Activated CD4-positive, alpha-beta T cell treated with anti-CD3 and anti-CD28 coated beads for 36 hours (primary cell): ENCODE measurements at regions of chr1 and their contacts with region 1.

Region 1: GRCh38 chr1:183251959-183252450 is 65.9 kb downstream of the LAMC2 start:
- DNase-seq: no peak
- ATAC-seq: no peak
- H3K4me3 Mint-ChIP-seq: no peak overlapping the region
- H3K27ac Mint-ChIP-seq: no peak overlapping the region
- H3K4me1 Mint-ChIP-seq: no peaks in the 10 kb centered on the region
- H3K27me3 Mint-ChIP-seq: peaks cover 21% of the 10 kb centered on the region

Region 2: GRCh38 chr1:182430263-182431068 is 821.5 kb before region 1 on chr1:
- CTCF ChIA-PET with region 1: no interaction called
- POLR2A ChIA-PET with region 1: no interaction called
- intact Hi-C with region 1: no loop called
- DNase-seq: peak; percentile 61
- ATAC-seq: peak; percentile 91
- H3K4me3 Mint-ChIP-seq: no peak overlapping the region
- H3K27ac Mint-ChIP-seq: no peak overlapping the region
- H3K4me1 Mint-ChIP-seq: peaks cover 20% of the 10 kb centered on the region
- H3K27me3 Mint-ChIP-seq: peaks cover 5% of the 10 kb centered on the region

Region 3: DNA sequence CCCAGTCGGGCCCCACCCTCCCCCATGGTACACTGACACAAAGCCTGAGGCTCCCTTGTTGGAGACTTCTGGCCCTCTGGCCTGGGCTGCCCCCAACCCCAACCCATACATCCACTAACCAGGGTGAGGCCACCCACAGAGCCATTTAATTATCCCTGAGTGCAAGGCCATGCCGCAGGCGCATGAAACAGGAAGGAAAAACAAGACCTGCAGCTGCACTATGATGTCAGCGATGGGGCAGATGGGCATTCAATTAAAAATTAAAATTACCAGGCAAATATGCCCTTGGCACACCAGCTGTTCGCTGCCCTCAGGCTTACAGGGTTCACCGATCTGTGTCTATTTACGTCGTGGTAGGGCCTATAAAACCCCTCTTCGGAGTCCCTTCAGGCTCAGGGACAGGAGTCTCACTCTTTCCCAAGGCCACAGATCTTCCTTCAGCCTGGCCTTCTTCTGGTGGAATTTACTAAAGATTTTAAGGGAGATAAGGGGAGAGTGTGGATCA is 618.3 kb before region 1 on chr1:
- CTCF ChIA-PET with region 1: no interaction called
- POLR2A ChIA-PET with region 1: no interaction called
- intact Hi-C with region 1: no loop called
- DNase-seq: no peak
- ATAC-seq: no peak
- H3K4me3 Mint-ChIP-seq: no peak overlapping the region
- H3K27ac Mint-ChIP-seq: no peak overlapping the region
- H3K4me1 Mint-ChIP-seq: peaks cover 32% of the 10 kb centered on the region
- H3K27me3 Mint-ChIP-seq: peaks cover 4% of the 10 kb centered on the region

Region 4: DNA sequence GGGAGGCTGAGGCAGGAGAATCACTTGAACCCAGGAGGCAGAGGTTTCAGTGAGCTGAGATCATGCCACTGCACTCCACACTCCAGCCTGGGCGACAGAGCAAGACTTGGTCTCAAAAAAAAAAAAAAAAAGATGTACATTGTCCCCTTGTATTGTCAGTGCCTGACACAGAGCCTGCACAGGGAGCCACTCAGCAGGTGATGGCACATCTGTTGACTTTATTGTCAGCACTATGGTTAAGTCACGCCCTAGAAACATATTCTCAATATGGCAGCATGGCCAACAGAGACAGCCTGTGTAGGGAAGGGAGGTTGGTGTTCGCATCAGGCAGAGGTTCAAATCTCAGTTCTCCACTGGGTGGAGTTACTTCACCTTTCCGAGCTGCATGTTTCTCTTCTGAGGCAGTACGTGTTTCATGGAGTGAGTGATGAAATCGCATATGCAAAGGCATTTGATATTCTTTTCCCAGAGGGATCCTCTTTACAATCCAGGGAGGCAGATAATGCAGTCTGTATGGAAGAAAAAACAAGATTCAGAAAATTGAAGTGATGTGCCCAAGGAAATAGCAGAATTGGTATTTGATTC is 45.4 kb before region 1 on chr1:
- CTCF ChIA-PET with region 1: no interaction called
- POLR2A ChIA-PET with region 1: no interaction called
- intact Hi-C with region 1: loop called in 1 of 2 experiments (anchors 1 kb)
- DNase-seq: no peak
- ATAC-seq: no peak
- H3K4me3 Mint-ChIP-seq: no peak overlapping the region
- H3K27ac Mint-ChIP-seq: no peak overlapping the region
- H3K4me1 Mint-ChIP-seq: peaks cover 3% of the 10 kb centered on the region
- H3K27me3 Mint-ChIP-seq: no peaks in the 10 kb centered on the region

Region 5: GRCh38 chr1:183318433-183318832 is 66.4 kb after region 1 on chr1:
- CTCF ChIA-PET with region 1: no interaction called
- POLR2A ChIA-PET with region 1: no interaction called
- intact Hi-C with region 1: no loop called
- DNase-seq: peak; percentile 23
- ATAC-seq: peak; percentile 30
- H3K4me3 Mint-ChIP-seq: no peak overlapping the region
- H3K27ac Mint-ChIP-seq: no peak overlapping the region
- H3K4me1 Mint-ChIP-seq: no peaks in the 10 kb centered on the region
- H3K27me3 Mint-ChIP-seq: peaks cover 13% of the 10 kb centered on the region

Region 6: GRCh38 chr1:183349201-183349711 is 97.3 kb after region 1 on chr1:
- CTCF ChIA-PET with region 1: no interaction called
- POLR2A ChIA-PET with region 1: interaction called, 10 read pairs
- intact Hi-C with region 1: no loop called
- DNase-seq: no peak
- ATAC-seq: no peak
- H3K4me3 Mint-ChIP-seq: no peak overlapping the region
- H3K27ac Mint-ChIP-seq: no peak overlapping the region
- H3K4me1 Mint-ChIP-seq: no peaks in the 10 kb centered on the region
- H3K27me3 Mint-ChIP-seq: peaks cover 9% of the 10 kb centered on the region